Posterior vena cava (tissue), 2 donors: ENCODE measurements at regions of chr9 and their contacts with region 1.

Region 1: GRCh38 chr9:81848472-81848871 is 79.8 kb upstream of the SPATA31D4 start:
- DNase-seq: no peak

Region 2: DNA sequence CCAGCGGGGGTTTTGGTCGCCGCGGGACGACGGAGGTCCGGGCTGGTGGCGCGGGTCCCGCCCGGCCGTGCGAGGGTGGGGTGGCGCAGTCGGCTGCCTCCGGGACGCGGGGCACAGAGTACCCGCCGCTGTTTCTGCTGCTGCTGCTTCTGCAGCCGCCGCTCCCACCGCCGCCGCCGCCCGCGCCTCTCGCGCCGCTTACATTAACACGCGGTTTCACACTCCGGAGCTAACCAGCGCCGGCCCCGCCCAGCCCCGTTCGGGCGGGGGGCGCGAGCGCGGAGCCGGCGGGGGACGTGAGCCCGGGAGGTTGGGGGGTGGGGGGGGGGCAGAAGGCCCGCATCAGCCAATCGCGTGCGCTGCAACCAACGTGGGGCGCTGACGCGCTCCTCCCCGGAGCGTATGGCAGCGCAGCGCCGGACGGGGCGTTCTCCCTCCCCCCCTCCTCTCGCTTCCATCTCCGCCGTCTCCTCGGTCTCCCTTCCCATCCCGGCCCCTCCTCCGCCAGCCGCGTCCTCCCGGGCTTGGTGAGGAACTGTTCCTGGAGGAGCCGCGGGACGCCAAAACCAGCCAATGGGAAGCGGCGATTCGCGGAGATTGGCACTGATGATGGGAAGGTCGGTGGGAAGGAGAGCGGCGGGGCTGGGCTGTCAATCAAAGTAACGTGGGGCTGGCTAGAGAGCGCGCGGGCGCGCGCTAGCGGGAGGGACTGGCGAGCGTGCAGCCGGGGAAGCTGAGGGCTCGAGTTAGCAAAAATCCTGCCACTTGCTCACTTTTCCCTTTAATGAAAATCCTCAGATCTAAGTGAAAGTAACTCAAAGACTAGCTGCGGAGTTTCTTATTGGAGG is 158.9 kb before region 1 on chr9 and contains the start of gene TLE1:
- intact Hi-C with region 1: loop called in 1 of 2 experiments (anchors 10 kb)
- DNase-seq: peak; percentile 99
- total RNA-seq, gene TLE1: 21.8 to 30.9 TPM

Region 3: DNA sequence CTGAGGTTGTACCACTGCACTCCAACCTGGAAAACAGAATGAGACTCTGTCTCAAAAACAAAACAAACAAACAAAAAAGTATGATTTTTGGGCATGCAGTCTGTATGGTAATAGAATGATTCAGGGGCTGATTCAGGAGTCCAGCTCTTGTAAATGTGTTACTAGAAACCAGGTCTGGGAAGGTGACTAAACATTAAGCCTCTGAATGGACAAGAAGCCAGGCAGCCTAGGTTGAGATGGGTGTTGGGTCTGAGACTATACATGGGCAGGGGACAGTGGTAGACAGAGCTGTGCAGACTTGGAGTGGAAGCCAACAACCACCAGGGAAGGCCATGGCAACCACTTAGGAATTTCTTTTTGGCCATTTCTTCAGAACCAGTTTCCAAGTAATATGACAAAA is 94.2 kb before region 1 on chr9:
- intact Hi-C with region 1: no loop called
- DNase-seq: no peak

Region 4: GRCh38 chr9:82073573-82074543 is 225.4 kb after region 1 on chr9:
- intact Hi-C with region 1: no loop called
- DNase-seq: no peak

Region 5: GRCh38 chr9:83238871-83239640 is 1390.6 kb after region 1 on chr9:
- intact Hi-C with region 1: no loop called
- DNase-seq: no peak